Pancreas (tissue), 10 donors: ENCODE measurements at regions of chr9 and their contacts with region 1.

Region 1: GRCh38 chr9:132169672-132170392 is 8.0 kb downstream of the NTNG2 start:
- DNase-seq: peak in 5 of 6 donors; percentile 38 to 86 (median 70)
- ATAC-seq: peak; percentile 30 to 77 (median 72)
- H3K4me3 ChIP-seq: no peak overlapping the region
- H3K27ac ChIP-seq: no peak overlapping the region
- H3K4me1 ChIP-seq: peaks cover under 1 to 5% (median 4%) of the 10 kb centered on the region in 3 donors
- H3K27me3 ChIP-seq: no peaks in the 10 kb centered on the region
- CTCF ChIP-seq: peak; percentile 72 to 87 (median 82)

Region 2: DNA sequence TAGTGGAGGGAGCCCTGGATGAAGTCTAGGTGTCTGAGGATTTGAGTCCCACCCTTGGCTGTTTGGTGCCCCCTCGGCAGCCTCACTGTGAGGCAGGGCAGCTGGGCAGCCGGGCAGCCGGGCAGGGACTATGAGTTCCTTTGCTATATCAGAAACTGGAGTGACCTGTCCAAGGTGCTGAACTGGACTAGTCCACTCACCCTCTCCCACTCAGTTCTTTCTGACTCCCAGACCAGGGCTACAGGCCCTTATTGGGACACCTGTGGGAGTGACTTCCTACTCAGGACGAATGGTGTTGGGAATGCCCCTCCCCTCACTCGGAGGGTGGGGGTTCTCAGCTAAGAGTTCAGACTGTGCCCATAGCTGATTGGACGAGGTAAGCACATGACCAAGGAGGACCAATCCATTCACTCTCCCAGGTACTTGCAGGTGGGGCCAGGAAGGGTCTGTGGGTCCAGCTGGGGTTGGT is 395.9 kb before region 1 on chr9:
- intact Hi-C with region 1: loop called in 1 of 3 experiments (anchors 10 kb)
- DNase-seq: peak in 3 of 6 donors; percentile 45 to 60 (median 55)
- ATAC-seq: peak in 3 of 4 donors; percentile 70 to 96 (median 90)
- H3K4me3 ChIP-seq: no peak overlapping the region
- H3K27ac ChIP-seq: no peak overlapping the region
- H3K4me1 ChIP-seq: no peaks in the 10 kb centered on the region
- H3K27me3 ChIP-seq: no peaks in the 10 kb centered on the region
- CTCF ChIP-seq: no peak